Thyroid gland (tissue), 4 donors: ENCODE measurements at regions of chr17 and their contacts with region 1.

Region 1: GRCh38 chr17:39621523-39622379 is 5.0 kb upstream of the PPP1R1B start:
- DNase-seq: peak; percentile 80 to 86
- H3K4me3 ChIP-seq: no peak overlapping the region
- H3K27ac ChIP-seq: no peak overlapping the region
- H3K4me1 ChIP-seq: peaks cover 10 to 14% of the 10 kb centered on the region in 2 donors
- H3K27me3 ChIP-seq: peaks cover 7% of the 10 kb centered on the region
- CTCF ChIP-seq: peak; percentile 93 to 100 (median 100)
- POLR2A ChIP-seq: no peak

Region 2: DNA sequence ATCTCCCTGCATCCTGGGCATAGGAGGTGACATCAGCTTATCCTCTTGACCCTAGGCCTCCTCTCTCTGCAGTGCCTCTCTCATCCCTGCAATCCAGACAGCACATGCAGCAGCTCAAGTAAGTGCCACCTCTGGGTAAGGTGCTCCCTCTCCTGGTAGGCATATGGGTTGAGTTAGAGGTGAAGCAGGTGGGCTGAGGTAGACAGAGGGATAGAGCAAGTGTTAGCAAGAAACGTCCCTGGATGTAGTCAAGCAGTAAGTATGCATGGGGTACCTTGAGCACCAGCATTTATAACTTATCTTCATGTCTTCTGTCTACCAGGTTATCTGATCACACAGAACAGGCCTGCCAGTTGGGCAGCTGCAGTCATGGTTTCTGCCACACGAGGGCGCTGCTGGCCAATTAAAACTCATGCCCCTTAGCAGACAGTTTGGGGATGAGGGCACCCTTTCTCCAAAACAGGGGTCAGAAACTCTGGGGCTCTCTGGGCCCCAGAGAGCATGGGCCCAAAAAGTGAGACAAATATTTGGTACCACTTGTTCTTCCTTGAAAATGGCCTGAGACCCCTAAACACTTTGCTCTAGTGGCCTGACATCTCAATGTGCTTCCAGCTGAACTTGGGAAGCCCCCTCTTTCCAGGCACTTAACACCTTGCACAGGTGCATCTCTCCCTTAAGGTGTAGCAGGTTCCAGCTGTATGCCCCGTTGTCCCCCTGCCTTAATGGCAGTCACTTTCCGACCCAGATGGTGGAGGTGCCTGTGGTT is 73.9 kb before region 1 on chr17:
- intact Hi-C with region 1: loop called (anchors 5 kb)
- DNase-seq: peak; percentile 50 to 55
- H3K4me3 ChIP-seq: no peak overlapping the region
- H3K27ac ChIP-seq: no peak overlapping the region
- H3K4me1 ChIP-seq: peaks cover 0 to 4% of the 10 kb centered on the region in 2 donors
- H3K27me3 ChIP-seq: no peaks in the 10 kb centered on the region
- CTCF ChIP-seq: peak; percentile 64 to 88 (median 72)
- POLR2A ChIP-seq: no peak

Region 3: GRCh38 chr17:39665642-39666224 is 44.0 kb after region 1 on chr17:
- intact Hi-C with region 1: loop called (anchors 2 kb)
- DNase-seq: peak in 1 of 2 donors; percentile 41
- H3K4me3 ChIP-seq: no peak overlapping the region
- H3K27ac ChIP-seq: no peak overlapping the region
- H3K4me1 ChIP-seq: peaks cover 32 to 71% of the 10 kb centered on the region in 2 donors
- H3K27me3 ChIP-seq: no peaks in the 10 kb centered on the region
- CTCF ChIP-seq: no peak
- POLR2A ChIP-seq: no peak

Region 4: DNA sequence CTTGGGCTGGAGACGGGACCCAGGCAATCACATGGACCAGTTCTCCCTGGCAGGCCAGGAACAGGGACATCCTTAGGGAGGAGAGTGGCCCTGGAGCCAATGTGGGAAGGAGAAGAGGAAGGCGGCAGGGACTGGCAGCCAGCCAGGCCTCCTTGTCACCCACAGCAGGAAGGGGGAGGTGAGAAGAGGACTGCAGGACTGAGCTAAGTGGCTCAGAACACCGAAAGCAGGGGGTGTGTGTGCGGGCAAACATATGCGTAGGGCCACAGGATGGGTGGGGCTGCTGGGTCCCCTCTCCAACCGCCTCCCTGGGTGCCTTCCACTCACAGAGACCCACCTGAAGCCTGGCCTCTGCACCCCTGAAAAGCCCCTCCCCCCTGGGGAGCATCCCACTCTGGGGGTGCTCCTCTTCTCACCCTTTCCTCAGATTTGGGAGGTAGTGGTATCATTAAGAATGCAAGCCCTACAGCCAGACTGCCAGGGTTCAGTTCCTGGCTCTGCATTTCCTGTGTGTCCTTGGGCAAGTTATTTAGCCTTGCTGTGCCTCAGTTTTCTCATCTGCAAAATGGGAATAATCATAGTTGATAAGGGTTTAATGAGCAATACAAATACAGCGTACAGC is 54.6 kb after region 1 on chr17:
- intact Hi-C with region 1: no loop called
- DNase-seq: peak; percentile 97 to 98
- H3K4me3 ChIP-seq: no peak overlapping the region
- H3K27ac ChIP-seq: peak overlapping the region; percentile 59 to 91 (median 87)
- H3K4me1 ChIP-seq: peaks cover 54 to 76% of the 10 kb centered on the region in 2 donors
- H3K27me3 ChIP-seq: no peaks in the 10 kb centered on the region
- CTCF ChIP-seq: no peak
- POLR2A ChIP-seq: peak in 1 of 2 donors; percentile 17

Region 5: GRCh38 chr17:39687811-39688518 is 66.2 kb after region 1 on chr17 and contains the start of gene PGAP3:
- intact Hi-C with region 1: loop called (anchors 5 kb)
- DNase-seq: peak; percentile 86 to 87
- H3K4me3 ChIP-seq: peak within 1 kb of the TSS; percentile 16 to 63 (median 48)
- H3K27ac ChIP-seq: peak within 1 kb of the TSS; percentile 90 to 95 (median 94)
- H3K4me1 ChIP-seq: peaks cover 7 to 22% of the 10 kb centered on the region in 2 donors
- H3K27me3 ChIP-seq: no peaks in the 10 kb centered on the region
- CTCF ChIP-seq: peak in 1 of 6 experiments; percentile 8
- POLR2A ChIP-seq: peak in 1 of 2 donors; percentile 73
- total RNA-seq, gene PGAP3: 55.6 to 88.1 (median 72.7) TPM

Region 6: DNA sequence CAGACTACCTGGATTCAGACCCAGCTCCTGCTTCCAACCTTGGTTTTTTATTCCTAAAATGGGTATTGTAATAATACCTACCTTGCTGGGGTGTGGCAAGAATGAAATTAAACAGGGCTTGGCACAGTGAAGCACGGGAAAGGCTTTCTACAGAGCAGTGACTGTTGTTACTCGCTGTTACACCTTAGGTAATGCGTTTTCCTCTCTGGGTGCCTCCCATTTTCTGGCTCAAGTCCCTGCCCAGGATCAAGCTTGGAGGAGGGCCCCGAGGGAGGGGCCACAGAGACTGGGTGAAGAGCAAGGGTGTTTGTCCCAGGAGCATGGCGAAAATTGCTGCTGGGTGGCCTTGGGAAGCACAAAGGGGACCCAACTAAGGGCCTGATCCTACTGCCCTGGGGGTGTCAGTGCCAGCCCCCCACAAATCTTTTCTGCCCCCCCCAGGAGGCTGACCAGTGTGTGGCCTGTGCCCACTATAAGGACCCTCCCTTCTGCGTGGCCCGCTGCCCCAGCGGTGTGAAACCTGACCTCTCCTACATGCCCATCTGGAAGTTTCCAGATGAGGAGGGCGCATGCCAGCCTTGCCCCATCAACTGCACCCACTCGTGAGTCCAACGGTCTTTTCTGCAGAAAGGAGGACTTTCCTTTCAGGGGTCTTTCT is 95.3 kb after region 1 on chr17:
- intact Hi-C with region 1: no loop called
- DNase-seq: peak in 1 of 2 donors; percentile 44
- H3K4me3 ChIP-seq: no peak overlapping the region
- H3K27ac ChIP-seq: peak overlapping the region; percentile 36 to 63 (median 58)
- H3K4me1 ChIP-seq: peaks cover 3 to 13% of the 10 kb centered on the region in 2 donors
- H3K27me3 ChIP-seq: no peaks in the 10 kb centered on the region
- CTCF ChIP-seq: no peak
- POLR2A ChIP-seq: no peak

Region 7: GRCh38 chr17:39754161-39754951 is 132.6 kb after region 1 on chr17:
- intact Hi-C with region 1: loop called (anchors 5 kb)
- DNase-seq: peak; percentile 97
- H3K4me3 ChIP-seq: peak overlapping the region; percentile 55 to 71 (median 62)
- H3K27ac ChIP-seq: peak overlapping the region; percentile 88 to 90 (median 90)
- H3K4me1 ChIP-seq: peaks cover 26 to 43% of the 10 kb centered on the region in 2 donors
- H3K27me3 ChIP-seq: no peaks in the 10 kb centered on the region
- CTCF ChIP-seq: peak; percentile 73 to 100 (median 99)
- POLR2A ChIP-seq: peak in 1 of 2 donors; percentile 82

Region 8: DNA sequence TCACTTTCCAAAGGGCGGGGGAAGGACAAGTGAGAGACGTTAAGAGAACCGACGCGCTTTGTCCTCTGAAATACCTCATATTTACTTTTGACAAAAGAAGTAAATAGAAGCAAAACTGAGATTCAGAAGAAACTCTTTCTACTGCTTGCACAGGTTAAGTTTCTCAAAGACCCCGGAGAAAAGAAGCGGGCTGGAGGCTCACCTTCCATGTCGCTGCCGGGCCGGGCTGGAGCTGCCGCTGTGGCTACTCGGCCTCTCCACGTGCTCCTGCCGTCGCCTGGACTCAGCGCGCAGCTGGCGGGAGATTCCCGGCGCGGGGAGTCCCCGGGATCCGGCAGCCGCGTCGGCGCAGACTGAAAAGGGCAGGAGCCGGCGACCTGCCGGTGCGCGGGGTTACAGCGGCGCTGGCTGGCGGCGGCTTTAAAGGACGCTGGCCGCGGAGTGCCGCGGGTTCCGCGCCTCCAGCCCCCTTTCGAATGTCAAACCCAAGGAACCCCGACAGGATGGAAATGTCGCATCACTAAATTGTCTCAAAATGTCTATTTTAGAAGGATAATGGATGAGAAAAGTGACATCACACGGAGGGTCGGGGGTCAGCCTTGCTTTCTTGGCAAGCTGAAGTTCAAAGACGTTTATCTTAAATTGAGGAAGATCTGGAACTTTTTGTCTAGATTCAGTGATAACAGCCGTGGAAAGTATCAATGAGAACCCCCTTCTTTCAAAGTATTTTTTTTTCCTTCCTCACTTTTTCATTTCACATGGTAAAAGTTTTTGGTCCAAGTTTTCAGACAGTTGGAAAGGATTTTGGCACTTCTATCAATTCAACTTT is 242.4 kb after region 1 on chr17 and contains the start of gene IKZF3:
- intact Hi-C with region 1: loop called (anchors 10 kb)
- DNase-seq: peak; percentile 76 to 87
- H3K4me3 ChIP-seq: no peak within 1 kb of the TSS
- H3K27ac ChIP-seq: no peak within 1 kb of the TSS
- H3K4me1 ChIP-seq: peaks cover 0 to 6% of the 10 kb centered on the region in 2 donors
- H3K27me3 ChIP-seq: no peaks in the 10 kb centered on the region
- CTCF ChIP-seq: peak in 4 of 6 experiments; percentile 31 to 65 (median 49)
- POLR2A ChIP-seq: no peak
- total RNA-seq, gene IKZF3: 1.8 to 2.8 (median 2.6) TPM